ENCODE measurements at regions of chr13 and their contacts with region 1.

Region 1: GRCh38 chr13:102800145-102801041 is 1.5 kb downstream of the BIVM start:
- DNase-seq: peak; percentile 34
- ATAC-seq: peak; percentile 74
- H3K4me3 ChIP-seq: peak overlapping the region; percentile 82 to 99
- H3K27ac ChIP-seq: peak overlapping the region; percentile 71
- H3K4me1 ChIP-seq: peaks cover 6 to 11% of the 10 kb centered on the region in 2 experiments
- H3K27me3 ChIP-seq: no peaks in the 10 kb centered on the region
- CTCF ChIP-seq: peak; percentile 49 to 78 (median 77); a peak in 5 of 6 replicates
- POLR2A ChIP-seq: no peak
- RAD21 ChIP-seq: peak; percentile 22

Region 2: GRCh38 chr13:102580552-102581169 is 219.7 kb before region 1 on chr13:
- CTCF ChIA-PET with region 1: no interaction called
- POLR2A ChIA-PET with region 1: no interaction called
- RAD21 ChIA-PET with region 1: no interaction called
- intact Hi-C with region 1: loop called (anchors 1 kb)
- DNase-seq: peak; percentile 68
- ATAC-seq: peak; percentile 87
- H3K4me3 ChIP-seq: no peak overlapping the region
- H3K27ac ChIP-seq: no peak overlapping the region
- H3K4me1 ChIP-seq: no peaks in the 10 kb centered on the region
- H3K27me3 ChIP-seq: peaks cover 21% of the 10 kb centered on the region; the same call in 1 of the 2 replicates
- CTCF ChIP-seq: peak; percentile 67; a peak in 5 of 6 replicates
- POLR2A ChIP-seq: no peak
- RAD21 ChIP-seq: peak; percentile 80

Region 3: DNA sequence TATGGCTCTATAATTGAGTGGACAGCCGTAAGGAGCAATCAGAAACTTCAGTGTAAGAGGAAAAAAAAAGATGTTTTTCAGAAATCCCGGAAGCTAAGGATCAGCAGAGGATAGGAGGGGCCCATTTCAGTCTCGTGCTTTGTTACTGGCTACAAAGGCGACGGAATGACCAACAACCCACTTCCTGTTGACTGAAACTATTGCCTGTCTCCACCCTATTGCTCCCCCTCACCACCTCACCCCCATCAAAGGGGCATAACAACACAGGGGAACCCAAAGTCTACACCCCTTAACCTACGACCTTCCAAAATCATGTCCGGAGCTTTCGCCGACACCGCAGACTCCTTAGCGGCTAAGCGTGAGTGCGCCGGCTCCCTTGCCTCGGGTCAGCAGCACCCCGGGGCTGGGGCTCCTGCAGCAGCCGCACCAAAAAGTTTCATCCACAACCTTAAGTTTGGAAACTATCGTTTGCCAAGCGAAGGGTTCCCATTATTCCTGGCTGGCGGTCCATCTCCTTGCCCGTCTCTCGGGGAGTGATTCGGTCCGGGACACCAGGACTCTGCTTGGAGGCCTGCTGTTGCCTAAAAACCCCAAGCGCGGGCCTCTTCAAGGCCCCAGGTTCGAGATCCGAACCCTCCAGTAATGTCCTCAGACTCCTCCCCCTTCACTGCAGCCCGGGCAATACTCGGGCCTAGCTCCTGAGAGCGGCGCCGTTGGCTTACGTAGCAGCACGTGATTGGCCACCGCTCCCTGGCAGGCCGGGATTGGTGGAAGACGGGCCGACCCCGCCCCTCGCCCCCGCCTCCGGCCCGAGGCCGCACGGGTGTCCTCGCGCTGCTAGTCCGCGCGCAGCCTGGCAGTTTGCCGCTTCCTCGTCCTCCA is 204.0 kb before region 1 on chr13 and contains the start of gene TPP2:
- CTCF ChIA-PET with region 1: interaction called, 4 read pairs
- POLR2A ChIA-PET with region 1: interaction called, 3 read pairs
- RAD21 ChIA-PET with region 1: no interaction called
- intact Hi-C with region 1: loop called (anchors 2 kb)
- DNase-seq: peak; percentile 95
- ATAC-seq: peak; percentile 92
- H3K4me3 ChIP-seq: peak within 1 kb of the TSS; percentile 78 to 97
- H3K27ac ChIP-seq: peak within 1 kb of the TSS; percentile 89
- H3K4me1 ChIP-seq: peaks cover 0 to 28% of the 10 kb centered on the region in 2 experiments; a peak in 3 of 4 replicates
- H3K27me3 ChIP-seq: no peaks in the 10 kb centered on the region
- CTCF ChIP-seq: no peak
- POLR2A ChIP-seq: peak; percentile 78
- RAD21 ChIP-seq: no peak
- total RNA-seq, gene TPP2: 36.7 TPM

Region 4: DNA sequence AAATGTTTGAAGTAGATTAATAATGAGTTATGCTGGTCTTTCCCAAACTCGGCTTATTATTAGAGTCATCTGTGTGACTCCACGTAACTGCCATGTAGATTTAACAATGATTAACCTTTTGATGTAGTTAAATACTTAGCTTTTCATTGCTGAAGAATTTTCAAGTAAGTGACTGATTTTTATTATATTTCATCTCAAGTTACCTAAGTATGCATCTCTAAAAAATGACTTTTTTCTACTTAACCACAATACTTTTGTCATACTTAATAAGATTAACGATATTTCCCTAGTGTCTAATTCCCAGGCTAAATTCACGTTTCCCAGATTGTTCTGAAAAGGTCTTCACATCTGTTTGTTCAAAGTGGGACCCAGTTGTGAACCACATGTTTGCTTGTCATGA is 16.3 kb after region 1 on chr13:
- CTCF ChIA-PET with region 1: no interaction called
- POLR2A ChIA-PET with region 1: no interaction called
- RAD21 ChIA-PET with region 1: no interaction called
- intact Hi-C with region 1: no loop called
- DNase-seq: no peak
- ATAC-seq: no peak
- H3K4me3 ChIP-seq: no peak overlapping the region
- H3K27ac ChIP-seq: no peak overlapping the region
- H3K4me1 ChIP-seq: no peaks in the 10 kb centered on the region
- H3K27me3 ChIP-seq: no peaks in the 10 kb centered on the region
- CTCF ChIP-seq: no peak
- POLR2A ChIP-seq: no peak
- RAD21 ChIP-seq: no peak